CD8-positive, alpha-beta T cell (primary cell): ENCODE measurements at regions of chr2 and their contacts with region 1.

Region 1: DNA sequence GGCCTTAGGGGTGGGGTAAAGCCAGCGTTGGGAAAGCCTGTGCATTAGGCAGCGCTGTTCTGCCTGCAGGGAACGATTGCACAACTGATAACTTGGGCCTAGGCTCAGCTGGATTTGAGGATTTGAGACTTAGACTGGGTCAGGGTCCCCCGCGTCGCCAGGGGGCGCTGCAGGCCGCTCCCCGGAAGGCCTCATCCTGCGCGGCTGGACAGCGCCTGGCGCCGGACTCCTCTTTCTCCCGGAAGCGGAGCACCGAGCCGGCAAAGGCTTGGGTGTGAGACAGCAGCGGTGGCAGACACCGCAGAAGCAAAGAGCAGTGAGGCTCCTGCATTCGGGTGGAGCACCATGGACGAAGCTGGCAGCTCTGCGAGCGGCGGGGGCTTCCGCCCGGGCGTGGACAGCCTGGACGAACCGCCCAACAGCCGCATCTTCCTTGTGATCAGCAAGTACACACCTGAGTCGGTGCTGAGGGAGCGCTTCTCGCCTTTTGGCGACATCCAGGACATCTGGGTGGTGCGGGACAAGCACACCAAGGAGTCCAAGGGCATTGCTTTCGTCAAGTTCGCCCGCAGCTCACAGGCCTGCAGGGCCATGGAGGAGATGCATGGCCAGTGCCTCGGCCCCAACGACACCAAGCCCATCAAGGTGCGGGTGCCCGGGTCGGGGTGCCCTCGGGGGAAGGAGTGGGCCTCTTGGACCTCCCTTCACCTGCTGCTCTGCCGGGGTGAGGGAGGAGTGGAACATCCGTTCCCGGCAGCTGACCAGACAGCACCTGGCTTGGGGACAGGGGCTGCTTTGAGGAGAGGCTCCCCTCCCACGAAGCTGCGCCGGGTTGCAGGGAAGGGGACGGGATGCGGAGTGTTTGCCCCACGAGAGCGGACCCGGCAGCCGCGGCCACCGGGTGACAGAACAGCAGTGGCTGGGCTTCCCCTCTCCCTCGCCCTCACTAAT is at the start of gene RBM45:
- DNase-seq: peak; percentile 62 to 93 (median 85)
- ATAC-seq: peak; percentile 91
- H3K4me3 ChIP-seq: peak within 1 kb of the TSS; percentile 73 to 81
- H3K4me3 Mint-ChIP-seq: peak within 1 kb of the TSS; percentile 94
- H3K27ac ChIP-seq: peak within 1 kb of the TSS; percentile 59 to 60
- H3K27ac Mint-ChIP-seq: peak within 1 kb of the TSS; percentile 89
- H3K4me1 ChIP-seq: peaks cover 16% of the 10 kb centered on the region
- H3K4me1 Mint-ChIP-seq: peaks cover 44% of the 10 kb centered on the region
- H3K27me3 ChIP-seq: no peaks in the 10 kb centered on the region
- H3K27me3 Mint-ChIP-seq: no peaks in the 10 kb centered on the region
- CTCF ChIP-seq: peak; percentile 95
- total RNA-seq, gene RBM45: 6.4 to 6.8 TPM

Region 2: GRCh38 chr2:177183860-177184259 is 928.6 kb before region 1 on chr2:
- CTCF ChIA-PET with region 1: no interaction called
- POLR2A ChIA-PET with region 1: no interaction called
- intact Hi-C with region 1: no loop called
- DNase-seq: no peak
- ATAC-seq: no peak
- H3K4me3 ChIP-seq: no peak overlapping the region
- H3K4me3 Mint-ChIP-seq: no peak overlapping the region
- H3K27ac ChIP-seq: no peak overlapping the region
- H3K27ac Mint-ChIP-seq: no peak overlapping the region
- H3K4me1 ChIP-seq: no peaks in the 10 kb centered on the region
- H3K4me1 Mint-ChIP-seq: no peaks in the 10 kb centered on the region
- H3K27me3 ChIP-seq: no peaks in the 10 kb centered on the region
- H3K27me3 Mint-ChIP-seq: peaks cover 2% of the 10 kb centered on the region
- CTCF ChIP-seq: no peak

Region 3: DNA sequence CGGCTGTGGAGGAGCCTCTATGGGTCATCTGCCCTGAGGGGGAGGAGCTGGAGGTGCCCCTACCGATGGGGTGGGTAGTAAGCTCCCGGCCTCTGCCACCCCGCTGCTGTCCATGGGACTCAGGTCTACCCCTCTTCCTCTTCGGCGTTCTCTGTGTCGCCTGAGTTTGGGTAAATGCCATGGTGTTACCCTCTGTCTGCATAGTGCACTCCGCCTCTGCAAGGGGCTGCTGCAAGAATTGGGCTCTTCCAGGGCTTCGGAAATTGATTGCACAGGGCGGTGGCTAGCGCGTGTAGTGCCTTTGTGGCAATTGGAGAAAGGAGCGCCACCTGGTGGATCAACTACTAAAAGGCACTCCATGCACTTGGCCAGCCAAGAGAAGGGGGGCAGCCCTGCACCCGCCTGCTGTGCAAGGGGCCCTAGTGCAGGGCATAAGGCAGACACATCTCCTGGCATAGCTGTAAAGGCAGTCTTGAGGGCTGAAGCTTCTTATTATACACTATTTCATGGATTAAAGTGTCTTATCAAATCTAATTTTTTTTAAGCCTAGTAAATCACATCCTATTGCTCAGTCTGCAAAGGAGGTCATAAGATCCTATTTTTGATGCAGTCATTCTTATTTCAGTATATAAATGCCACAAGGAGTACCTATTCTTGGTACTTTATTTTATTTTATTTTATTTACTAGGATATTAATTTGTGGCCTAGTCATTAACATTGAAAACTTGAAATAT is 348.8 kb before region 1 on chr2:
- CTCF ChIA-PET with region 1: no interaction called
- POLR2A ChIA-PET with region 1: no interaction called
- intact Hi-C with region 1: loop called in 1 of 2 experiments (anchors 10 kb)
- DNase-seq: peak; percentile 57 to 83 (median 77)
- ATAC-seq: peak; percentile 97
- H3K4me3 ChIP-seq: no peak overlapping the region
- H3K4me3 Mint-ChIP-seq: no peak overlapping the region
- H3K27ac ChIP-seq: no peak overlapping the region
- H3K27ac Mint-ChIP-seq: no peak overlapping the region
- H3K4me1 ChIP-seq: peaks cover 5% of the 10 kb centered on the region
- H3K4me1 Mint-ChIP-seq: peaks cover 6% of the 10 kb centered on the region
- H3K27me3 ChIP-seq: no peaks in the 10 kb centered on the region
- H3K27me3 Mint-ChIP-seq: peaks cover 12% of the 10 kb centered on the region
- CTCF ChIP-seq: peak; percentile 82

Region 4: GRCh38 chr2:177942731-177943130 is 169.7 kb before region 1 on chr2:
- CTCF ChIA-PET with region 1: no interaction called
- POLR2A ChIA-PET with region 1: no interaction called
- intact Hi-C with region 1: no loop called
- DNase-seq: no peak
- ATAC-seq: no peak
- H3K4me3 ChIP-seq: no peak overlapping the region
- H3K4me3 Mint-ChIP-seq: no peak overlapping the region
- H3K27ac ChIP-seq: no peak overlapping the region
- H3K27ac Mint-ChIP-seq: no peak overlapping the region
- H3K4me1 ChIP-seq: no peaks in the 10 kb centered on the region
- H3K4me1 Mint-ChIP-seq: no peaks in the 10 kb centered on the region
- H3K27me3 ChIP-seq: peaks cover 0 to 3% of the 10 kb centered on the region in 2 experiments
- H3K27me3 Mint-ChIP-seq: no peaks in the 10 kb centered on the region
- CTCF ChIP-seq: no peak

Region 5: GRCh38 chr2:178074657-178075429 is 37.6 kb before region 1 on chr2:
- CTCF ChIA-PET with region 1: no interaction called
- POLR2A ChIA-PET with region 1: no interaction called
- intact Hi-C with region 1: no loop called
- DNase-seq: no peak
- ATAC-seq: no peak
- H3K4me3 ChIP-seq: no peak overlapping the region
- H3K4me3 Mint-ChIP-seq: no peak overlapping the region
- H3K27ac ChIP-seq: no peak overlapping the region
- H3K27ac Mint-ChIP-seq: no peak overlapping the region
- H3K4me1 ChIP-seq: no peaks in the 10 kb centered on the region
- H3K4me1 Mint-ChIP-seq: peaks cover 11% of the 10 kb centered on the region
- H3K27me3 ChIP-seq: peaks cover 6 to 14% of the 10 kb centered on the region in 2 experiments
- H3K27me3 Mint-ChIP-seq: peaks cover 52% of the 10 kb centered on the region
- CTCF ChIP-seq: no peak

Region 6: DNA sequence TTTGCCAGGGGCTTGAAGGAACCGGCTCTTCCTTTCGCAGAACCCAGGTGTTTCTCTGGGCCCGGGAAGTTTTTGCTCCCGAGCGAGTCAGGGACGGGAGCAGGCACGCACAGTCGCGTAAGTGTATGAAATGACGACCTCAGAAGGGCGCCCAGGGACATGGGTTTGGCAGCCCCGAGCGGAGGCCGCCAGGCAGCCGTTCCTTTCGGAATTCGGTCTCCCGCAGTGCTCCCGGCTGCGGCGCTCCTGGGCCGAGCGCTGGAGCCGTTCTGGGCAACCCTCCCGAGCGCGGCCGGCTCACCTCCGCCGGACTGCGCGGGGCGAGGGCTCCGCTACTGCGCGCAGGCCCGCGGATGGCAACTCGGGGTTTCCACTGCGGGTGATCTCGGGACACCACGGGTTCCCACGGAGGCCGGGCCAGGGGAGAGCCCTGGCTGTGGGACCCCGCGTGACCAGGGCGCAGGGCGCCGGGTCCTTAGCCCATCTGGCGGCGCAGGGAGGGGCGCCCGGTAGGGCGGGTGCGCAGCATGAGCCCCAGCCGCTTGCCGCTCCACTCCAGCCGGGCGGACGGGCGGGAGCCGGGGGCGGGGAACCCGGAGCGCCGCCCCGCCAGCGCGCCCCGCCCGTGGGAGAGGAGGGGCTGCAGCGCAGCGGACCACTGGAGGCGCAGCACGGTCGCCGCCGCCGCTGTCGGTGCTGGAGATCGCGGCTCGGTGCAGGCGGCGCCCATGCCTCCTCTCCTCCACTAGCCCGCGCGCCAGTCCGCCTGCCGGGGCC is 81.5 kb after region 1 on chr2 and contains the start of gene OSBPL6:
- CTCF ChIA-PET with region 1: no interaction called
- POLR2A ChIA-PET with region 1: no interaction called
- intact Hi-C with region 1: loop called in 1 of 2 experiments (anchors 5 kb)
- DNase-seq: peak; percentile 2 to 65 (median 45)
- ATAC-seq: peak; percentile 79
- H3K4me3 ChIP-seq: peak within 1 kb of the TSS; percentile 32 to 50
- H3K4me3 Mint-ChIP-seq: peak within 1 kb of the TSS; percentile 72
- H3K27ac ChIP-seq: no peak within 1 kb of the TSS
- H3K27ac Mint-ChIP-seq: no peak within 1 kb of the TSS
- H3K4me1 ChIP-seq: peaks cover 13% of the 10 kb centered on the region
- H3K4me1 Mint-ChIP-seq: peaks cover 13% of the 10 kb centered on the region
- H3K27me3 ChIP-seq: peaks cover 8 to 10% of the 10 kb centered on the region in 2 experiments
- H3K27me3 Mint-ChIP-seq: peaks cover 50% of the 10 kb centered on the region
- CTCF ChIP-seq: no peak
- total RNA-seq, gene OSBPL6: 0.11 TPM in 1 of 2 experiments, not detected in the other

Region 7: GRCh38 chr2:178306352-178307073 is 194.0 kb after region 1 on chr2:
- CTCF ChIA-PET with region 1: no interaction called
- POLR2A ChIA-PET with region 1: no interaction called
- intact Hi-C with region 1: no loop called
- DNase-seq: peak in 5 of 9 experiments; percentile 6 to 24 (median 14)
- ATAC-seq: no peak
- H3K4me3 ChIP-seq: no peak overlapping the region
- H3K4me3 Mint-ChIP-seq: no peak overlapping the region
- H3K27ac ChIP-seq: no peak overlapping the region
- H3K27ac Mint-ChIP-seq: no peak overlapping the region
- H3K4me1 ChIP-seq: no peaks in the 10 kb centered on the region
- H3K4me1 Mint-ChIP-seq: no peaks in the 10 kb centered on the region
- H3K27me3 ChIP-seq: no peaks in the 10 kb centered on the region
- H3K27me3 Mint-ChIP-seq: peaks cover 13% of the 10 kb centered on the region
- CTCF ChIP-seq: no peak

Region 8: DNA sequence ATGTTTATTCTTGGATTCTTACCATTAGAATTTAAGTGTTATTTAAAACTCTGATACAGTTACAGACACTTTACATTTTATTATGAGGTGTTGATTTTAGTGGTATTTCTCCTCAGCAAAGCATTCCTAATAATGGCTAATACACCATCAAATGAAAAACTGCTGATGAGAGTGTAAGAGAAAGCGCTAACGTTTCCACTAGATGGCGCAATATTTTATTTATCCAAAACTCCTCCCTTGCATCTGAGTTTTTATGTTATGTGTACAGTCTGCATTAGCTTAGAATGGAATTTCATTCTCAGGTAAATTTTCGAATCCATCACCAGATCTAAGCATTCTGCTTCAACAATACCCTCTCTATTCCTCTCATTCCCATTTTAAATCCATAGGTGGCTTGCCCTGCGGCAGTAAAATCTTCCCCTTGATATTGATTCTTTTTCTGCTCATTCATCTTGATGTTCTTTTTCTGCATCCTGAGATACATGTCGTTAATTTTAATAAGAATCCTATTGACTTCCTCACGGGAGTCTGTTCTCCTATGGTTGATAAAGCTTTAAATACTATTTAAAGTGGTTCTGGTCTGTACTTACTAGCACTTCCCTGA is 284.6 kb after region 1 on chr2:
- CTCF ChIA-PET with region 1: no interaction called
- POLR2A ChIA-PET with region 1: no interaction called
- intact Hi-C with region 1: loop called in 1 of 2 experiments (anchors 5 kb)
- DNase-seq: peak in 2 of 9 experiments; percentile 55 to 67
- ATAC-seq: peak; percentile 62
- H3K4me3 ChIP-seq: no peak overlapping the region
- H3K4me3 Mint-ChIP-seq: no peak overlapping the region
- H3K27ac ChIP-seq: no peak overlapping the region
- H3K27ac Mint-ChIP-seq: no peak overlapping the region
- H3K4me1 ChIP-seq: no peaks in the 10 kb centered on the region
- H3K4me1 Mint-ChIP-seq: no peaks in the 10 kb centered on the region
- H3K27me3 ChIP-seq: no peaks in the 10 kb centered on the region
- H3K27me3 Mint-ChIP-seq: peaks cover 7% of the 10 kb centered on the region
- CTCF ChIP-seq: peak; percentile 84

Region 9: GRCh38 chr2:178478439-178479274 is 366.2 kb after region 1 on chr2 and contains the start of gene FKBP7:
- CTCF ChIA-PET with region 1: no interaction called
- POLR2A ChIA-PET with region 1: no interaction called
- intact Hi-C with region 1: loop called in 1 of 2 experiments (anchors 10 kb)
- DNase-seq: peak; percentile 79 to 95 (median 86)
- ATAC-seq: peak; percentile 82
- H3K4me3 ChIP-seq: peak within 1 kb of the TSS; percentile 84 to 88
- H3K4me3 Mint-ChIP-seq: peak within 1 kb of the TSS; percentile 98
- H3K27ac ChIP-seq: peak within 1 kb of the TSS; percentile 92 to 93
- H3K27ac Mint-ChIP-seq: peak within 1 kb of the TSS; percentile 99
- H3K4me1 ChIP-seq: peaks cover 39% of the 10 kb centered on the region
- H3K4me1 Mint-ChIP-seq: peaks cover 51% of the 10 kb centered on the region
- H3K27me3 ChIP-seq: no peaks in the 10 kb centered on the region
- H3K27me3 Mint-ChIP-seq: no peaks in the 10 kb centered on the region
- CTCF ChIP-seq: peak; percentile 87
- total RNA-seq, gene FKBP7: 0.69 to 0.79 TPM

Region 10: GRCh38 chr2:180006781-180007579 is 1894.5 kb after region 1 on chr2 and contains the start of gene CWC22:
- CTCF ChIA-PET with region 1: no interaction called
- POLR2A ChIA-PET with region 1: no interaction called
- intact Hi-C with region 1: loop called in 1 of 2 experiments (anchors 10 kb)
- DNase-seq: peak; percentile 74 to 96 (median 86)
- ATAC-seq: peak; percentile 93
- H3K4me3 ChIP-seq: peak within 1 kb of the TSS; percentile 72 to 88
- H3K4me3 Mint-ChIP-seq: peak within 1 kb of the TSS; percentile 93
- H3K27ac ChIP-seq: peak within 1 kb of the TSS; percentile 98 to 99
- H3K27ac Mint-ChIP-seq: peak within 1 kb of the TSS; percentile 99
- H3K4me1 ChIP-seq: peaks cover 14% of the 10 kb centered on the region
- H3K4me1 Mint-ChIP-seq: peaks cover 38% of the 10 kb centered on the region
- H3K27me3 ChIP-seq: no peaks in the 10 kb centered on the region
- H3K27me3 Mint-ChIP-seq: no peaks in the 10 kb centered on the region
- CTCF ChIP-seq: no peak
- total RNA-seq, gene CWC22: 13.8 to 15.3 TPM